ENCODE measurements at regions of chr6 and their contacts with region 1.

Region 1: GRCh38 chr6:68544450-68544849 is 90.6 kb upstream of the ADGRB3 start:
- DNase-seq: no peak
- ATAC-seq: no peak
- H3K4me3 ChIP-seq: no peak overlapping the region
- H3K27ac ChIP-seq: no peak overlapping the region
- H3K4me1 ChIP-seq: no peaks in the 10 kb centered on the region
- H3K27me3 ChIP-seq: no peaks in the 10 kb centered on the region
- CTCF ChIP-seq: no peak
- EP300 ChIP-seq: no peak
- POLR2A ChIP-seq: no peak
- RAD21 ChIP-seq: no peak

Region 2: DNA sequence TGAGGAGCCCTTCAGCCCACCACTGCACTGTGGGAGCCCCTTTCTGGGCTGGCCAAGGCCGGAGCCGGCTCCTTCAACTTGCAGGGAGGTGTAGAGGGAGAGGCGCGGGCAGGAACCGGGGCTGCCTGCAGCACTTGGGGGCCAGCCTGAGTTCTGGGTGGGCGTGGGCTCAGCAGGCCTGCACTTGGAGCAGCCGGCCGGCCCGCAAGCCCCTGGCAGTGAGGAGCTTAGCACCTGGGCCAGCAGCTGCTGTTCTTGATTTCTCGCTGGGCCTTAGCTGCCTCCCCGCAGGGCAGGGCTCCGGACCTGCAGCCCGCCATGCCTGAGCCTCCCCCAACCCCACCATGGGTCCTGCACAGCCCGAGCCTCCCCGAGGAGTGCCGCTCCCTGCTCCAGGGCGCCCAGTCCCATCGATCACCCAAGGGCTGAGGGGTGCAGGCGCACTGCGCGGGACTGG is 11.1 kb before region 1 on chr6:
- CTCF ChIA-PET with region 1: no interaction called
- POLR2A ChIA-PET with region 1: no interaction called
- RAD21 ChIA-PET with region 1: no interaction called
- SMC1A ChIA-PET with region 1: no interaction called
- in situ Hi-C with region 1: no loop called
- intact Hi-C with region 1: loop called (anchors 1 kb)
- DNase-seq: no peak
- ATAC-seq: no peak
- H3K4me3 ChIP-seq: no peak overlapping the region
- H3K27ac ChIP-seq: no peak overlapping the region
- H3K4me1 ChIP-seq: no peaks in the 10 kb centered on the region
- H3K27me3 ChIP-seq: no peaks in the 10 kb centered on the region
- CTCF ChIP-seq: no peak
- EP300 ChIP-seq: no peak
- POLR2A ChIP-seq: no peak
- RAD21 ChIP-seq: no peak

Measured in GM12878 (cell line).